ENCODE measurements at regions of chr16 and their contacts with region 1.

Region 1: DNA sequence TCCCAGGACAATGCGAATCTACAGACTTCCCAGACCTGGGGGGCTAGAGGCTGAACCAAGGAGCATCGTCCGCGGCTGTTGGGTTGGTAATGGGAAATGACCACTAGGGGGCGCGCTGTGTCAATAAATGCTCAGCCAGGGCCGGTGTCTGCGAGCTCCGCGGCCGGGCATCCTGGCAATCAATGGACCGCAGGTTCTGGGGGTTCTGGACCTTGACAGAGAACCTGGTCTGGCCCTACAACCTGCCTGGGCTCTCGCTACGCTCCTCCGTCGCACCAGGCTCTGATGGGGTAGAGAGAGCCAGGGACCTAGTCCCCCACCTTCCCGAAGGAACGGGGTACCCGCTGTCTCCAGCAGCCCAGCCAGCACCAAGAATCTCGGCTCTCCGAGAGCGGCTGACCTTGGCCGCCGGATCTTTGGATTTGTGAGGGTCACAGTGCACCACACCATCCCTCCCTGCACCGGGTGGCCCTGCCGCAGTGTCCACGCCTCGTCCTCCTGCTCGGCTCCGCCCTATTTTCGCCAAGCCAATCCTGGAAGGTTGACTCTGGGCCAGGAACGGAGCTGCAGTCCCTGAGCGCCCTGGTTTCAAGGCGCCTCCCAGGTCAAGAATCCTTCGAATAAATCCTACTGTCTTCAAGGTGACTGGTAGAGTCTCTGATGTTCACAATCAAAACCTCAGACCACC is 20.4 kb upstream of the BEAN1 start:
- DNase-seq: peak; percentile 94
- H3K4me3 Mint-ChIP-seq: peak overlapping the region; percentile 83
- H3K27ac Mint-ChIP-seq: no peak overlapping the region
- H3K4me1 Mint-ChIP-seq: peaks cover 26% of the 10 kb centered on the region
- H3K27me3 Mint-ChIP-seq: no peaks in the 10 kb centered on the region

Region 2: GRCh38 chr16:66228792-66229191 is 177.9 kb before region 1 on chr16:
- CTCF ChIA-PET with region 1: no interaction called
- intact Hi-C with region 1: no loop called
- DNase-seq: no peak
- H3K4me3 Mint-ChIP-seq: no peak overlapping the region
- H3K27ac Mint-ChIP-seq: no peak overlapping the region
- H3K4me1 Mint-ChIP-seq: peaks cover 3% of the 10 kb centered on the region
- H3K27me3 Mint-ChIP-seq: peaks cover 5% of the 10 kb centered on the region

Region 3: GRCh38 chr16:66483689-66484481 is 77.2 kb after region 1 on chr16:
- CTCF ChIA-PET with region 1: interaction called, 94 read pairs
- intact Hi-C with region 1: loop called (anchors 1 kb)
- DNase-seq: peak; percentile 86
- H3K4me3 Mint-ChIP-seq: no peak overlapping the region
- H3K27ac Mint-ChIP-seq: peak overlapping the region; percentile 33
- H3K4me1 Mint-ChIP-seq: peaks cover 22% of the 10 kb centered on the region
- H3K27me3 Mint-ChIP-seq: no peaks in the 10 kb centered on the region

Region 4: DNA sequence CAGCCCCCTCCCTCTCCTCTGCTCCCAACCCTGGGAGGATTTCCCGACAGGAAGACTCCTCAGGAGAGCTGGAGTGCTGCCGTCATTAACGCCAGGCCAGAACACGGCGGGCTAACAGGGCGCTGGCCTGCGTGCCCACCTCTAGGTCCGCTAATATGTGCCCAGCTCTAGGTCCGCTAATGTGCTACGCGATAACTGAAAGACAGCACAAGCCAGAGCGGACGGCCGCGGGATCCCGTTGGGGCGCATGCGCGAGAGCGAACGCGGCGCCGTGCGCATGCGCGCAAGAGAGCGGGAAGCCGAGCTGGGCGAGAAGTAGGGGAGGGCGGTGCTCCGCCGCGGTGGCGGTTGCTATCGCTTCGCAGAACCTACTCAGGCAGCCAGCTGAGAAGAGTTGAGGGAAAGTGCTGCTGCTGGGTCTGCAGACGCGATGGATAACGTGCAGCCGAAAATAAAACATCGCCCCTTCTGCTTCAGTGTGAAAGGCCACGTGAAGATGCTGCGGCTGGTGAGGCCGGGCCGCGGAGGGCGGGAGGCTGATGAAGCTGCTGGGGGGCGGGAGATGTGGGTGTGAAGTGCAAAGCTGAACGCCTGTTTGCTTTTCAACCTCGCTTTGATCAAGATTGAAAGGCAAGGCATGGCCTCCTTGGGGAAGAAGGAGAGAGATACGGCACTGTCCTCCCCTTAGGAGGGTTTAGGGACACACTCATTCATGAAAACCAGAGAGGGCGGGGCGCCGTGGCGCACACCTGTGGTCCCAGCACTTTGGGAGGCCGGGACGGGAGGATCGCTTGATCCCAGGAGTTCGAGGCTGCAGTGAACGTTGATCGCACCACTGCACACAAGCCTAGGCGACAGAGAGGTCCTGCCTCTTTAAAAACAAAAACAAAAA is 145.9 kb after region 1 on chr16 and contains the start of gene CKLF:
- CTCF ChIA-PET with region 1: interaction called, 4 read pairs
- intact Hi-C with region 1: loop called (anchors 1 kb)
- DNase-seq: peak; percentile 90
- H3K4me3 Mint-ChIP-seq: peak within 1 kb of the TSS; percentile 87
- H3K27ac Mint-ChIP-seq: peak within 1 kb of the TSS; percentile 95
- H3K4me1 Mint-ChIP-seq: peaks cover 60% of the 10 kb centered on the region
- H3K27me3 Mint-ChIP-seq: no peaks in the 10 kb centered on the region
- total RNA-seq, gene CKLF: 114 to 126 TPM

Region 5: GRCh38 chr16:66588981-66589713 is 182.5 kb after region 1 on chr16:
- CTCF ChIA-PET with region 1: interaction called, 22 read pairs
- intact Hi-C with region 1: loop called (anchors 1 kb)
- DNase-seq: peak; percentile 88
- H3K4me3 Mint-ChIP-seq: peak overlapping the region; percentile 50
- H3K27ac Mint-ChIP-seq: no peak overlapping the region
- H3K4me1 Mint-ChIP-seq: peaks cover 32% of the 10 kb centered on the region
- H3K27me3 Mint-ChIP-seq: no peaks in the 10 kb centered on the region

Region 6: GRCh38 chr16:66650707-66651473 is 244.2 kb after region 1 on chr16:
- CTCF ChIA-PET with region 1: interaction called, 9 read pairs
- intact Hi-C with region 1: loop called (anchors 2 kb)
- DNase-seq: peak; percentile 93
- H3K4me3 Mint-ChIP-seq: peak overlapping the region; percentile 68
- H3K27ac Mint-ChIP-seq: no peak overlapping the region
- H3K4me1 Mint-ChIP-seq: peaks cover 13% of the 10 kb centered on the region
- H3K27me3 Mint-ChIP-seq: no peaks in the 10 kb centered on the region

Region 7: GRCh38 chr16:66751303-66751991 is 344.8 kb after region 1 on chr16 and contains the start of gene DYNC1LI2:
- CTCF ChIA-PET with region 1: interaction called, 3 read pairs
- intact Hi-C with region 1: loop called (anchors 2 kb)
- DNase-seq: peak; percentile 82
- H3K4me3 Mint-ChIP-seq: peak within 1 kb of the TSS; percentile 88
- H3K27ac Mint-ChIP-seq: peak within 1 kb of the TSS; percentile 78
- H3K4me1 Mint-ChIP-seq: peaks cover 36% of the 10 kb centered on the region
- H3K27me3 Mint-ChIP-seq: peaks cover 3% of the 10 kb centered on the region
- total RNA-seq, gene DYNC1LI2: 30.8 to 31.0 TPM

Region 8: DNA sequence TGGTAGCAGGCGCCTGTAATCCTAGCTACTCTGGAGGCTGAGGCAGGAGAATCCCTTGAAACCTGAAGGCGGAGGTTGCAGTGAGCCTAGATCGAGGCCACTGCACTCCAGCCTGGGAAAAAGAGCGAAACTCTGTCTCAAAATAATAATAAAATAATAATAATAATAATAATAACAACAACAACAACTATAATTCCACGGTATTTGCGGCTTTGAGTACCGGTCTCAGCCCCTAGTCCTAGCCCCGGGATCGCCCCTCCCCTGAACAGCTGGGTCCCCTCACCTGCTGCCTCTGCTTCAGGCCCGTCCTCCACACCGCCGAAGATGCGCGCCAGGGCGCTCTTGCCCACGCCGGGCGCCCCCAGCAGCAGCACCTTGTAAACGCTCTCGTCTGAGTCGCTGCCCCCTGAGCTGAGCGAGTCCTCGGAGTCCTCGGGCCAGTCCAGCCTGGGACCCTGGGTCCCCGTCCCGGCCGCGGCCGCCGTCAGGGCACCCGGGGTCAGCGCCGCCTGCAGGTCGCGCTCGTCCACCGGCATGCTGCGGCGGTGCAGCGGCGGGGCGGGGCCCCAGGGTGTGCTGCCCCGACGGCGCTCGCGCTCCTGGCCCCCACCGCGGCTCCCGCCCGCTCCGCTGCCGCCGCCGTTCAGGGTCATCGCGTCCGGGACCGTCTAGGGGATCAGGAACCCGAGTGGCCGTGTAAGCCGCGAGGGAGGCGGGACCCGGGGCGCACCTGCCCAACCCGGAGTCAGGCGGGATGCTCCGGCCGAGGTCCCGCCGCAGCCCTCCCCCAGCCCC is 518.0 kb after region 1 on chr16:
- CTCF ChIA-PET with region 1: no interaction called
- intact Hi-C with region 1: loop called (anchors 5 kb)
- DNase-seq: peak; percentile 42
- H3K4me3 Mint-ChIP-seq: peak overlapping the region; percentile 66
- H3K27ac Mint-ChIP-seq: no peak overlapping the region
- H3K4me1 Mint-ChIP-seq: peaks cover 10% of the 10 kb centered on the region
- H3K27me3 Mint-ChIP-seq: peaks cover 24% of the 10 kb centered on the region

Measured in activated naive CD4-positive, alpha-beta T cell treated with anti-CD3 and anti-CD28 coated beads for 36 hours (primary cell).